Mammary epithelial cell (primary cell): ENCODE measurements at regions of chr18 and their contacts with region 1.

Region 1: DNA sequence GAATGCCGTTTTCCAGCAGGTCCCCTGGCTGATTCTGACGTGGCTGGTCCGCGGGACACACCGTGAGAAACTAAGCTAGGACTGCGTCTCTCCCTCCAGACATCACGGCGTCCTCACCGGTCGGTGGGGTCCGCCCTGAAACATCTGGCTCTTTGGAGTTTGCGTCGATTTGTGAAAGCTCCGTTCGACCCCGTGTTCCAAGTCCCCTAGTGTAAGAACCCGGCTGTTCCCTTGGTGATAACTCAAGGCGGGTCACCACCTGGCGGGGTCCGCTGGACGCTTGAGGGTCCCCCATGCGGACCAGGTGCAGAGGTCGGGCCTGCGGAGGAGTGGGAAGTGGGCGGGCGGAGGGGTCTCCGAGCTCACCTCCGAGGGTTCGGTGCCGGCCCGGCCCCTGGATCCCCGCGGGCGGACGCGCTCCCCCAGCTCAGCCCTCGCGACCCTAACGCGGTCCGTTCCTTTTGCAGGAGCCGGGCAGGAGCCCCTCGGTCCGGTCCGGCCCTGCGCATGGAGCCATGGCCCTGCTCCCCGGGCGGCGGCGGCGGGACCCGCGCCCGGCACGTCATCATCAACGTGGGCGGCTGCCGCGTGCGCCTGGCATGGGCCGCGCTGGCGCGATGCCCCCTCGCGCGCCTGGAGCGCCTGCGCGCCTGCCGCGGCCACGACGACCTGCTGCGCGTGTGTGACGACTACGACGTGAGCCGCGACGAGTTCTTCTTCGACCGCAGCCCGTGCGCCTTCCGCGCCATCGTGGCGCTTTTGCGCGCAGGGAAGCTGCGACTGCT is 65.6 kb downstream of the KCNG2 start:
- DNase-seq: no peak
- H3K4me3 ChIP-seq: no peak overlapping the region
- H3K27ac ChIP-seq: no peak overlapping the region
- H3K4me1 ChIP-seq: no peaks in the 10 kb centered on the region
- H3K27me3 ChIP-seq: no peaks in the 10 kb centered on the region
- CTCF ChIP-seq: no peak

Region 2: DNA sequence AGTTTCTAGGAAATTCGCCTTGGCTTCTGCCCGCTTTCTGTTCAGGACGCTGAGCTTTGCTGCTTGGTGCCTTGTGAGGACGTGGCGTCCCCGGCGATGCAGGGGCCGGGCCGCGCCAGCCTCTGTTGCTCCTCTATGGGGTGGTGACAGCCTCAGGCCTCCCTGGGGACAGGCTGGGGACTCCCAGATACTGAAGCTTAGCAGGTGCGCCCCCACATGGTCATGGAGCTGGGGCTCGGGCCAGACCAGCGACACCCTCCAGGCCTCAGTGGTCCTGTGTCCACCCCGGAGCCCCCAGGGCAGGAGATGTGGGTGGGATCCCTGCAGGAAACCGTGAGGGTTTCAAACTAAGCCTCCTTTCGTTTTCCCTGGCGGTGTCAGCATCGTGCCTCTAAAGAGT is 36.4 kb before region 1 on chr18:
- CTCF ChIA-PET with region 1: no interaction called
- dilution Hi-C with region 1: loop called (anchors 5 kb)
- in situ Hi-C with region 1: no loop called
- intact Hi-C with region 1: no loop called
- DNase-seq: no peak
- H3K4me3 ChIP-seq: no peak overlapping the region
- H3K27ac ChIP-seq: no peak overlapping the region
- H3K4me1 ChIP-seq: no peaks in the 10 kb centered on the region
- H3K27me3 ChIP-seq: no peaks in the 10 kb centered on the region
- CTCF ChIP-seq: no peak